Astrocyte of the cerebellum (primary cell): ENCODE measurements at regions of chr1 and their contacts with region 1.

Region 1: GRCh38 chr1:156444407-156445001 is 56.1 kb downstream of the MEF2D start:
- DNase-seq: no peak
- H3K4me3 ChIP-seq: no peak overlapping the region
- CTCF ChIP-seq: peak; percentile 41

Region 2: DNA sequence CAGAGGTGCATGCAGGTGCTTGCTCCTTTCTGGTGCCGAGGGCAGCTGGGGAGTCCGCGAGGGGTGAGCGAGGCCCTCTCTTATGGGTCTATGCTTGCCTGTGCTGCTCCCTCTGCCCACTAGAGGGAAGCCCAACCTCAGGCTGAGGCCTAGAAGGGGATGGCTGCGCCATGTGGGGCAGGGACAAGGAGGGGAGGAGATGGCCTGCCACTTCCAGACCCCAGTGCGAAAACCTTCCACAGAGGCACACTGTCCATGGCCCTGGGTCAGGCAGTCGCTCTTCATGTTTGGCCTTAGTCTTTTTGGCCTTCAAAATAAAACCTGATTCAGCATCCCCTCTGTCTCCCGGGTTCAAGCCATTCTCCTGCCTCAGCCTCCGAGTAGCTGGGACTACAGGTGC is 61.5 kb before region 1 on chr1:
- in situ Hi-C with region 1: no loop called
- DNase-seq: peak; percentile 18
- H3K4me3 ChIP-seq: no peak overlapping the region
- CTCF ChIP-seq: peak; percentile 91

Region 3: DNA sequence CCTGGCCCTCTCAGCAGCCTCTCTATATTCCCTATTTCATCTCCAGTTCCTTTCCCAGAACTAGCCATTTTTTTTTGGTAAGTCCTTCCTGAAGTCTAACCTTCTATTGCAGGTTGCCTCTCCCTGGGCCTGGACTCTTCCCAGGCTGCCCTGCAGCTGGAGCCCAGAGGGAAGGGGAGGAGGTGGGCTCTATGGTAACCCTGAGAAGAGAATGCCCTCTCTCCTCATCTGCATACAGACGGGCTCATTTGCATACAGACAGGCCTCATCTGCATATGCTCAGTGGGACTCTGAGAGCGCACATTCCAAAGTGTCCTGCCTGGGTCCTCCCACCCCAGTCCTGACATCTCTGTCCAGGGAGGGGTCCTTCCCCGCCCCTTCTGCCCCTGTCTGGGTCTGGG is 42.8 kb before region 1 on chr1:
- in situ Hi-C with region 1: loop called (anchors 5 kb)
- DNase-seq: no peak
- H3K4me3 ChIP-seq: no peak overlapping the region
- CTCF ChIP-seq: no peak